Naive thymus-derived CD4-positive, alpha-beta T cell (primary cell): ENCODE measurements at regions of chr19 and their contacts with region 1.

Region 1: GRCh38 chr19:1513499-1514294 is 878 bp upstream of the ADAMTSL5 start:
- DNase-seq: peak; percentile 44 to 83 (median 64)
- ATAC-seq: peak; percentile 74
- H3K4me3 ChIP-seq: no peak overlapping the region
- H3K4me3 Mint-ChIP-seq: peak overlapping the region in 5 of 10 donors; percentile 17 to 62 (median 33)
- H3K27ac ChIP-seq: no peak overlapping the region
- H3K27ac Mint-ChIP-seq: no peak overlapping the region
- H3K4me1 ChIP-seq: peaks cover 0 to 13% of the 10 kb centered on the region in 2 donors
- H3K4me1 Mint-ChIP-seq: peaks cover 0 to 27% (median 15%) of the 10 kb centered on the region in 7 donors
- H3K27me3 ChIP-seq: no peaks in the 10 kb centered on the region
- H3K27me3 Mint-ChIP-seq: peaks cover 0 to 21% (median 0%) of the 10 kb centered on the region in 5 donors

Region 2: DNA sequence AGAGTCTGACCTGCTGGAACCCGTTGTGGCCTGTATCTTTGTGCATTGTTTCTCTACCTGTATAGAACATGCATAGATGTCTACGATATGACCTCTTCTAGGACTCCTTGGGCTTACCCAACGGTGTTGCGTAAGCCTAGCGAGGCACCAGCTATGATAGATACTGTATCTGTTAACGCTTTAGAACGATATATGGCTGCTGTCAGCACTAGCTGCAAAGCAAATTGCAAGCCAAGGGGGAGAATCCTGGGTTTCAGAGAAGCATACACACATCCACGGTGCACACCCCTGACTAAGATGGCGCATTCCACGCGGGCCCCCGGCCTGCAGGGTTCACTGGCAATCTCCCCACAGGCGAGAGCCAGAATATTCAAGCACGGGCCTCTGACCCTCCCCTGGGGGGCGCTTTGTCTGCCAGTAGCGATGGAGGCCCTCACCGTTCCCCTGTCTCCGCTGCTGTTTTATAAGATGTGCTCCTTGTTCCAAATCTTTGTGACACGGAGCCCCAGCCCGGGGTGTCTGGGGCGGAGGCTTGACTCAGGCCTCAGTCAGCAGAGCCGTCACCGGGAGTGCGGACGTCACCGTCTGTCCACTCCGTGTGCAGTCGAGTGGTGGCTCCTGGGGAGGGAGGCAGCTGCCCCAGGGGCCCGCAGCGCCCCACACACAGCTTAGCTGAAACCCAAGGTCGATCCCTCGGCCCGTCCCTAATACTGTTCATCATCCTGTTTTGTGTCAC is 88.4 kb before region 1 on chr19:
- CTCF ChIA-PET with region 1: no interaction called
- POLR2A ChIA-PET with region 1: no interaction called
- intact Hi-C with region 1: no loop called
- DNase-seq: no peak
- ATAC-seq: no peak
- H3K4me3 ChIP-seq: no peak overlapping the region
- H3K4me3 Mint-ChIP-seq: no peak overlapping the region
- H3K27ac ChIP-seq: no peak overlapping the region
- H3K27ac Mint-ChIP-seq: peak overlapping the region in 1 of 9 donors; percentile 49
- H3K4me1 ChIP-seq: no peaks in the 10 kb centered on the region
- H3K4me1 Mint-ChIP-seq: peaks cover 0 to 8% (median 4%) of the 10 kb centered on the region in 7 donors
- H3K27me3 ChIP-seq: no peaks in the 10 kb centered on the region
- H3K27me3 Mint-ChIP-seq: no peaks in the 10 kb centered on the region

Region 3: DNA sequence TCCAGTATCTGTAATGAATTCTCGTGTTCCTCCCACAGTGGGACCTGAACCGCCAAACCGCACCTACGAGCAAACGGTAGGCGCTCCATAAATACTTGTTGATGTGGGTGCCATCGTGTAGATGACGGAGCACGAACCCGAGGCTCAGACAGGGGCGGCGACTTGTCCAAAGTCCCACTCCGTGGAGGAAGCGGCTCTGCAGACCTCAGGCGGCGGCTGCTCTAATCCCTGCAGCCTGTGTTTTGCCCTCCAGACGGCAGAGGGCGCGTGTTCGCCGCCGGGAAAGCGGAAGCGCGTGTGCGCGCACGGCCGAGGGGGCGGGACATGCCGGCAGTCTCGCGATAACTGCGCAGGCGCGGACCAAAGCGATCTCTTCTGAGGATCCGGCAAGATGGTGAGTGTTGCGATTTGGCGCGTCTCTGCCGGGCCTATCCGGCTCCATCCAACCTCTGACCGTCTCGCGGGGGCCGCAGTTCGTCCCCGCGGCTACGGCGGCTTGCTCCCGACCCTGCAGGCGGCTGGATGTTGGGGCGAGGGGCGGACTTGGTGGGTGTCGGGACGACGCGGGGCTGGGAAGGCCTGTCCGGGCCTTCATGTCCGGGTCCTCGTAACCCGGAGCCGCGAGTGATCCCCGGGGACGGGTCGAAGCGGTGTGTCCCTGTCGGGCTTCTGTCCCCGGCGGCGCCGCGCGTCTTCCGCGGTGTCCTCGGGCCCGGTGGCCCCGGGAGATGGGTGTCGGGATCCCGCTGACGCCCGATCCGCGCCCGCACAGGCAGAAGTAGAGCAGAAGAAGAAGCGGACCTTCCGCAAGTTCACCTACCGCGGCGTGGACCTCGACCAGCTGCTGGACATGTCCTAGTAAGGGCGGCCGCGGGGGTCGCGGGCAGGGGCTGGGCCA is 75.4 kb before region 1 on chr19 and contains the start of gene RPS15:
- CTCF ChIA-PET with region 1: no interaction called
- POLR2A ChIA-PET with region 1: interaction called, 3 read pairs
- intact Hi-C with region 1: loop called (anchors 1 to 10 kb)
- DNase-seq: peak; percentile 92 to 98 (median 96)
- ATAC-seq: peak; percentile 97
- H3K4me3 ChIP-seq: peak within 1 kb of the TSS; percentile 82
- H3K4me3 Mint-ChIP-seq: peak within 1 kb of the TSS; percentile 87 to 99 (median 98)
- H3K27ac ChIP-seq: peak within 1 kb of the TSS; percentile 92
- H3K27ac Mint-ChIP-seq: peak within 1 kb of the TSS; percentile 96 to 100 (median 99)
- H3K4me1 ChIP-seq: peaks cover 8 to 11% of the 10 kb centered on the region in 2 donors
- H3K4me1 Mint-ChIP-seq: peaks cover 9 to 34% (median 15%) of the 10 kb centered on the region in 7 donors
- H3K27me3 ChIP-seq: no peaks in the 10 kb centered on the region
- H3K27me3 Mint-ChIP-seq: no peaks in the 10 kb centered on the region
- total RNA-seq, gene RPS15: 1,300 to 2,097 (median 2,012) TPM

Region 4: DNA sequence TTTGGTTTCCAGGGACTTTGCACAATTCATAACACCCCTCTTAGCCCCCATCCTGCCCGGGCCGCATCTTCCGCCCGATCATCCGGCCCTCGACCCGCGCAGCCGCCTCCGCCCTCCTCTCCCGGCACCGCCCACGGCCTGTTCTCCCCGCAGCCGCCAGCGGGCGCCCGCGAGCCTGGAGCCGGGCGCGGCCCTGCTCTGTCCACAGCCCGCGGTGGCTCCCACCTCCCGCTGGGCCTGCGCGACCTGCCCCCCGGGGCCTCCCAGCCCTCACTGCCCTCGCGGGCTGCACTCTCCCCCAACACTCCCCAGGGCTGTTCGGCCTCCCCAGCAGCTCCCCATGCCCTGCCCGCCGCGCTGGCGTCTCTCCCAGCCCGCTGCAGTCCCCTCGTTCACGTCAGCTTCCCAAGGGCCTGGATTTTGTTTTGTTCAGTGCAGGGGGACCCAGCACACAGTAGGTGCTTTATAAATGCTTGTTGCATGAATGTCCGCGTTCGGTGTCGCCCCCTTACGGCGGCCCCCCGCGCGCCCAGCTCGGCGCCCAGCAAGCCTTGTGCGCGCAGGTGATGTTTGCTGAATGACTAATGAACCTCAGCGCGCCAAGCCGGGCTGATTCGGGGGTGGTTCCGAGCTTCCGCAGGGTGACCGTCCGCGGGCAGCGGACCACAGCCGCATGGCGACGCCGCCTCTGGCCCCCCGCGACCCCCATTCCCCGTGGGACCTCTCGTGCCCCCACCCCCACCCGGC is 68.3 kb before region 1 on chr19:
- CTCF ChIA-PET with region 1: interaction called, 3 read pairs
- POLR2A ChIA-PET with region 1: interaction called, 3 read pairs
- intact Hi-C with region 1: loop called (anchors 1 to 10 kb)
- DNase-seq: peak; percentile 48 to 88 (median 71)
- ATAC-seq: peak; percentile 94
- H3K4me3 ChIP-seq: peak overlapping the region; percentile 50
- H3K4me3 Mint-ChIP-seq: peak overlapping the region; percentile 34 to 78 (median 64)
- H3K27ac ChIP-seq: no peak overlapping the region
- H3K27ac Mint-ChIP-seq: peak overlapping the region in 1 of 9 donors; percentile 5
- H3K4me1 ChIP-seq: peaks cover 5 to 9% of the 10 kb centered on the region in 2 donors
- H3K4me1 Mint-ChIP-seq: peaks cover 9 to 30% (median 15%) of the 10 kb centered on the region in 7 donors
- H3K27me3 ChIP-seq: peaks cover 12 to 27% of the 10 kb centered on the region in 2 donors
- H3K27me3 Mint-ChIP-seq: peaks cover 22 to 32% (median 25%) of the 10 kb centered on the region in 5 donors

Region 5: GRCh38 chr19:1470203-1471009 is 43.3 kb before region 1 on chr19:
- CTCF ChIA-PET with region 1: no interaction called
- POLR2A ChIA-PET with region 1: no interaction called
- intact Hi-C with region 1: loop called in 1 of 2 experiments (anchors 2 kb)
- DNase-seq: peak in 8 of 9 donors; percentile 43 to 73 (median 64)
- ATAC-seq: peak; percentile 77
- H3K4me3 ChIP-seq: peak overlapping the region; percentile 59
- H3K4me3 Mint-ChIP-seq: peak overlapping the region; percentile 42 to 87 (median 74)
- H3K27ac ChIP-seq: no peak overlapping the region
- H3K27ac Mint-ChIP-seq: peak overlapping the region in 2 of 9 donors; percentile 43 to 68
- H3K4me1 ChIP-seq: peaks cover 19 to 30% of the 10 kb centered on the region in 2 donors
- H3K4me1 Mint-ChIP-seq: peaks cover 0 to 14% (median 12%) of the 10 kb centered on the region in 7 donors
- H3K27me3 ChIP-seq: peaks cover 0 to 6% of the 10 kb centered on the region in 2 donors
- H3K27me3 Mint-ChIP-seq: peaks cover 0 to 16% (median 0%) of the 10 kb centered on the region in 5 donors